Prostate gland (tissue), 2 donors: ENCODE measurements at regions of chr5 and their contacts with region 1.

Region 1: GRCh38 chr5:141475625-141476131 is at the start of gene PCDHGC3:
- DNase-seq: peak; percentile 94
- H3K4me3 ChIP-seq: peak within 1 kb of the TSS; percentile 46 to 50
- H3K27ac ChIP-seq: peak within 1 kb of the TSS; percentile 88
- H3K4me1 ChIP-seq: peaks cover 2% of the 10 kb centered on the region
- H3K27me3 ChIP-seq: no peaks in the 10 kb centered on the region
- CTCF ChIP-seq: peak in 3 of 4 experiments; percentile 46 to 62 (median 59)
- POLR2A ChIP-seq: peak; percentile 56
- total RNA-seq, gene PCDHGC3: 27.6 to 55.3 TPM

Region 2: DNA sequence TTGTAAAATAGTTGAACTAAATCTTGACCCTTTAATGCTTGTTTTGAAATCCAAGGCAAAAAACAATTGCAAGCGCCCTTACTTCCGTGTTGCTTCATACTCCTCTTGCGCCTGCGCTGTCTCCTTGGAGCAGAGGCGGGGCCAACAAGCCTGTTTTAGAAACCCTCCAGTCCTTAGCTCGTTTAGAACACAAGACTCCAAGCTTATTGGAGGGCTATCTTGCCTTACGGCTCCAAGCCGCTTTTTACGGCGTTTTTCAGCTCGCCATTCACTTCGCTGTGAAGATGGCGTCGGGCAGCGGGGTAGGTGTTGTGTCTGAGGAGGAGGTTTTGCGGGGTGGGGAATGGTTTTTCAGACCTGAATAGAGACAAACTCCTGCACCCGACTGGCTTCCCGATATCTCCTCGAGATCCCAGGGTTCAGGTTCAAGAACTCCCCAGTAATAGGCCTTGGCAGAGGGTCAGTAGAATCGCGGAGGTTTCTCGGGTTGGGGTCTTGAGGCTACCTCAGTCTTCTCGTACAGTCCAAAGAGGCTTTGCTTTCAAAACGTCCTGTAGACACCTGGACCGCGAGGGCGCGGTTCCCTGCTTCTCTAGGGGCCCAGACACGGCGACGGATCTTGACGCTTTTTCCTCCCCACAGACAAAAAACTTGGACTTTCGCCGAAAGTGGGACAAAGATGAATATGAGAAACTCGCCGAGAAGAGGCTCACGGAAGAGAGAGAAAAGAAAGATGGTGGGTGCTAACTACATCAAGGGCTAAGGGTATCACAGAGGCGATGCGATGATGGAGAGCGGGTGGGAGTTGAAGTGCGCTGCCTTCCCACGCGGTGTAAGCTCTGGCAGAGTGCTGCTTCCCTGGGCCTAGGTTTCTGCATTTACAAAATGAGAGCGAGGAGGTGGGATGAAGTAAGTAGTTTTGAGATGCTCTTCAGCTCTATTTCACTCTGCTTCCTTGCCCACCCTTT is 775.2 kb before region 1 on chr5 and contains the start of gene ZMAT2:
- intact Hi-C with region 1: no loop called
- DNase-seq: peak; percentile 96
- H3K4me3 ChIP-seq: peak within 1 kb of the TSS; percentile 62 to 65
- H3K27ac ChIP-seq: peak within 1 kb of the TSS; percentile 36 to 65
- H3K4me1 ChIP-seq: peaks cover 6% of the 10 kb centered on the region
- H3K27me3 ChIP-seq: no peaks in the 10 kb centered on the region
- CTCF ChIP-seq: no peak
- POLR2A ChIP-seq: peak; percentile 55
- total RNA-seq, gene ZMAT2: 26.0 to 36.8 TPM

Region 3: GRCh38 chr5:141330299-141331080 is 145.2 kb before region 1 on chr5 and contains the start of gene PCDHGA1:
- intact Hi-C with region 1: no loop called
- DNase-seq: no peak
- H3K4me3 ChIP-seq: no peak within 1 kb of the TSS
- H3K27ac ChIP-seq: no peak within 1 kb of the TSS
- H3K4me1 ChIP-seq: no peaks in the 10 kb centered on the region
- H3K27me3 ChIP-seq: peaks cover 11% of the 10 kb centered on the region
- CTCF ChIP-seq: no peak
- POLR2A ChIP-seq: no peak
- total RNA-seq, gene PCDHGA1: 0.64 to 4.8 TPM

Region 4: DNA sequence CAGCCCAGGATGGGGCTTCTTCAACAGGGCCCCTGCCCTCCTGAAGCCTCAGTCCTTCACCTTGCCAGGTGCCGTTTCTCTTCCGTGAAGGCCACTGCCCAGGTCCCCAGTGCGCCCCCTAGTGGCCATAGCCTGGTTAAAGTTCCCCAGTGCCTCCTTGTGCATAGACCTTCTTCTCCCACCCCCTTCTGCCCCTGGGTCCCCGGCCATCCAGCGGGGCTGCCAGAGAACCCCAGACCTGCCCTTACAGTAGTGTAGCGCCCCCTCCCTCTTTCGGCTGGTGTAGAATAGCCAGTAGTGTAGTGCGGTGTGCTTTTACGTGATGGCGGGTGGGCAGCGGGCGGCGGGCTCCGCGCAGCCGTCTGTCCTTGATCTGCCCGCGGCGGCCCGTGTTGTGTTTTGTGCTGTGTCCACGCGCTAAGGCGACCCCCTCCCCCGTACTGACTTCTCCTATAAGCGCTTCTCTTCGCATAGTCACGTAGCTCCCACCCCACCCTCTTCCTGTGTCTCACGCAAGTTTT is 36.8 kb after region 1 on chr5:
- intact Hi-C with region 1: loop called (anchors 5 kb)
- DNase-seq: peak; percentile 84
- H3K4me3 ChIP-seq: peak overlapping the region; percentile 50 to 51
- H3K27ac ChIP-seq: peak overlapping the region; percentile 84 to 87
- H3K4me1 ChIP-seq: peaks cover 4% of the 10 kb centered on the region
- H3K27me3 ChIP-seq: no peaks in the 10 kb centered on the region
- CTCF ChIP-seq: peak; percentile 70 to 90 (median 76)
- POLR2A ChIP-seq: peak; percentile 28

Region 5: DNA sequence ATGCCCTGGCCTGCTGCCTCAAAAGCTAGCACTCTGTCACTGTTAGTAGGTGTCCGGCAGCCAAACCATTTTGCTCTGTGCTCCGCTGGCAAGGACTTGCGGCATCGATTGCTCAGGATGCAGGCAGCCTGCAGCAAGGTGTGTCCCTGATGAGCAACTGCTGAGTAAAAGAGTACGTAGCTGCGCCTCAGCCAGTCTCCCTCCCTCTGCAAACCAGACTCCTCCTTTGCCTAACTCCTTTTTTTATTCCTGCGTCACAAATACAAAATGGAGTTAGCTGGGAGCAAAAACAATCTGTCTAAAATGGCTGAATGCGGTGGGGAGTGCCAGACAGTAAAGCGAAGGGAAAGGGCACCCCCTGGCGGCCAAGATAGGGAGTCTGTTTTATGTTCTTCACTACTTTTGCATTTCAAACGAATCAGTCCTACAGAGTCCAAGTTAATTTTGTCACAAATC is 82.0 kb after region 1 on chr5:
- intact Hi-C with region 1: loop called (anchors 2 kb)
- DNase-seq: peak; percentile 47
- H3K4me3 ChIP-seq: no peak overlapping the region
- H3K27ac ChIP-seq: peak overlapping the region; percentile 44
- H3K4me1 ChIP-seq: peaks cover 5% of the 10 kb centered on the region
- H3K27me3 ChIP-seq: no peaks in the 10 kb centered on the region
- CTCF ChIP-seq: peak; percentile 72 to 83 (median 76)
- POLR2A ChIP-seq: no peak

Region 6: GRCh38 chr5:142063878-142064331 is 588.2 kb after region 1 on chr5:
- intact Hi-C with region 1: no loop called
- DNase-seq: no peak
- H3K4me3 ChIP-seq: no peak overlapping the region
- H3K27ac ChIP-seq: no peak overlapping the region
- H3K4me1 ChIP-seq: no peaks in the 10 kb centered on the region
- H3K27me3 ChIP-seq: no peaks in the 10 kb centered on the region
- CTCF ChIP-seq: no peak
- POLR2A ChIP-seq: no peak